ENCODE measurements at regions of chr6 and their contacts with region 1.

Region 1: DNA sequence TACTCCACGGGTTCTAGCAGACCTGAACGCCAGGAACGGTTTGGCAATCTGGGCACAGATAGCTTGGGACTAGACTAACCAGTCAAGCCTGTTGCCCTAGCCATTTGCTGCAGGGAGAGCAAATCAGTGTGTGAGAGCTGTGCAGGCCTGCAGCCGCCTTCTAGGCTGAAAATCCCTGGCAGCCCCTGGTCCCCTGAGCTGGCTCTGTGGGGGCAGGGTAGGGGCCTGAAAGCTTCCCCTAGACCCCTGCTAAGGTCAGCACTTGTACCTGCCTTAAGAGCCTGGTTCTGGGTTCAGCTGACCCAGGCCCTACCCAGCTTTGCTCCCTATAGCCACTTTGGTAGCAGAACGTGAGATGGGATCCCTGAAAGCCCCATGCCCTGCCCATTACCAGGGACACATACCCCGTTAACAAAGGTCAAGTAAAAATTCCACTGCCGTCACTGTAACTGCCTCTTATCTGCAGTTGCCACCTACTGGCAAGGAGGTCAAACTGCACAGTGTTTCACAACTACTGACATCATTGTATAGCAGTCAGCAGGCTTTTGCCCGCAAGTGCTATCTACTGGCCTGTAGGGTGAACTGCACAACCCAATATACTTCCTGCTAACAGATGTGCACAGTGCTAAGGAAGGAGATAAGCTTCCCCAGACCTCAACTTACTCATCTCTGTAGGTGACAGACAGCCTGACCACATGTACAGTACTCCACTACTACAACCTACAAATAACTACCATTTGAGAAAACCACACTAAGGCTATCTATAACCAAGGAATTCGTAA is 95.1 kb upstream of the OLIG3 start:
- DNase-seq: peak; percentile 75
- H3K4me3 Mint-ChIP-seq: no peak overlapping the region
- H3K27ac Mint-ChIP-seq: peak overlapping the region; percentile 44
- H3K4me1 Mint-ChIP-seq: peaks cover 14% of the 10 kb centered on the region
- H3K27me3 Mint-ChIP-seq: peaks cover 6% of the 10 kb centered on the region

Region 2: DNA sequence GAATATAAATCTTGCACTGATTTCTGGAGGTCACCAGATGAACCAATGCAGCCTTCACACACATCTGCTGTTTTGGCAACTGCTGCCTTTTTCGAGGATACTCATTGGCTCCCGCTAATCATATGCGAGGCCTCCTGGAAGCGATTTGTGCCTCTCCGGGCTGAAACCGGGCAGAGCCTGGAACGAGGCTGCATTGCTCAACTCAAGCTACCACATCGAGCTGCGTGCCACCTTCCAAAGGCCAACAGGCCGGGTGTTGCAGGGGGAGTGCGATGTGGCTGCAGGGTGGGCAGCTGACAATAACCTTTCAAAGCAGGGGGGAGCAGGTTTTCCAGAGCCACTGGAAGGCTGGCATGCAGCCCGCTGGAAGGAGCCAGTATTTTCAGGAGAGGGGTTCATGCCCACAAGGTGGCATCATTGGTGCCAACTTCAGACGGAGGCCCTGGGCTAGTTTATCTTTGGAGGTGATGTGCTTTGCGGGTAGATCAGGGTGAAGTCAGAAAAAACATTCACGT is 247.5 kb before region 1 on chr6:
- CTCF ChIA-PET with region 1: interaction called, 17 read pairs
- POLR2A ChIA-PET with region 1: no interaction called
- intact Hi-C with region 1: loop called (anchors 1 kb)
- DNase-seq: peak; percentile 66
- H3K4me3 Mint-ChIP-seq: peak overlapping the region; percentile 11
- H3K27ac Mint-ChIP-seq: no peak overlapping the region
- H3K4me1 Mint-ChIP-seq: peaks cover 13% of the 10 kb centered on the region
- H3K27me3 Mint-ChIP-seq: peaks cover 4% of the 10 kb centered on the region

Region 3: DNA sequence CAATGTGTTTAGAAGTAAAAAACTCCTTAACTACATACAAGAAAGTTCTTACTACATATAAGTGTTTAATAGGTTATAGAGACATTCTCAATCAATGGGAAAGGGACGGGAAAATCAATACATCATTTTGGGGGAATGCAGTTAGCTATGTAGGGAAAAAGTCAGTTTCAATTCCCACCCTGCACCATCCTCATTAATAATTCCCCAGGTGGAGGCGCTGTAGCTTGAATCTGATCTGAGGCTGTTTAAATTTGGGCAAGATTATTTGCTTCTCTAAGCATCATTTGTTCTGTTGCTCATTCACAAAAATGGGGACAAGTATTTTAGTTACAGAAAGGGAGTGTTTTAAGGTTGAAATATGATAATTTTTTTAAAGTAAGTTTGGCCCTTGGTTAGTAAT is 114.2 kb before region 1 on chr6:
- CTCF ChIA-PET with region 1: interaction called, 12 read pairs
- POLR2A ChIA-PET with region 1: no interaction called
- intact Hi-C with region 1: no loop called
- DNase-seq: no peak
- H3K4me3 Mint-ChIP-seq: no peak overlapping the region
- H3K27ac Mint-ChIP-seq: no peak overlapping the region
- H3K4me1 Mint-ChIP-seq: no peaks in the 10 kb centered on the region
- H3K27me3 Mint-ChIP-seq: peaks cover 8% of the 10 kb centered on the region

Region 4: GRCh38 chr6:137497721-137498463 is 91.4 kb before region 1 on chr6:
- CTCF ChIA-PET with region 1: interaction called, 30 read pairs
- POLR2A ChIA-PET with region 1: no interaction called
- intact Hi-C with region 1: loop called (anchors 1 kb)
- DNase-seq: peak; percentile 32
- H3K4me3 Mint-ChIP-seq: peak overlapping the region; percentile 52
- H3K27ac Mint-ChIP-seq: no peak overlapping the region
- H3K4me1 Mint-ChIP-seq: peaks cover 46% of the 10 kb centered on the region
- H3K27me3 Mint-ChIP-seq: peaks cover 67% of the 10 kb centered on the region

Region 5: GRCh38 chr6:137602313-137603270 is 13.3 kb after region 1 on chr6:
- CTCF ChIA-PET with region 1: interaction called, 31 read pairs
- POLR2A ChIA-PET with region 1: no interaction called
- intact Hi-C with region 1: no loop called
- DNase-seq: no peak
- H3K4me3 Mint-ChIP-seq: no peak overlapping the region
- H3K27ac Mint-ChIP-seq: no peak overlapping the region
- H3K4me1 Mint-ChIP-seq: no peaks in the 10 kb centered on the region
- H3K27me3 Mint-ChIP-seq: peaks cover 30% of the 10 kb centered on the region

Measured in activated CD4-positive, alpha-beta memory T cell treated with anti-CD3 and anti-CD28 coated beads for 36 hours (primary cell).